Panc1 (cell line): ENCODE measurements at regions of chr20 and their contacts with region 1.

Region 1: DNA sequence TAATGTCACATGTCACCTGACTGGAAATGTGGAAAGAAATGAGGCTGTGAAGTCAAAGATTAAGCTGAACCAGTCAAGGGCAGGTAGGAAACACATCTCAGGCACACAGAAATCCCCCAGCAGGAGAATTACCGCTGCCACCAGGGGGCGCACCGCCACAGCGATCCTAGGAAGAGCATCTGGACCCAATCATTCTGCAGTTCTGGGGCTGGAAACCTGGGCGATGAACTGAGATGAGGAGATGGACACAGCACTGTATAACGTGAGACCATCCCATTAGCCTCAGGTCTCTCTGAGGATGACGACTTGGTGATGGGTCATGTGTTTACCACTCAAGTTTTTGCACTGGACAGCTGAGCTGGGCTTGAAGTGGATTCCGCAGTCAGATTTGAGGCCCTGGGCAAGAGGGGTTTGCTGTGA is 6.5 kb upstream of the SLC24A3 start:
- DNase-seq: peak; percentile 38
- ATAC-seq: peak; percentile 84
- H3K4me3 ChIP-seq: no peak overlapping the region
- H3K27ac ChIP-seq: no peak overlapping the region
- H3K4me1 ChIP-seq: no peaks in the 10 kb centered on the region
- H3K27me3 ChIP-seq: peaks cover 27% of the 10 kb centered on the region
- CTCF ChIP-seq: peak; percentile 95

Region 2: DNA sequence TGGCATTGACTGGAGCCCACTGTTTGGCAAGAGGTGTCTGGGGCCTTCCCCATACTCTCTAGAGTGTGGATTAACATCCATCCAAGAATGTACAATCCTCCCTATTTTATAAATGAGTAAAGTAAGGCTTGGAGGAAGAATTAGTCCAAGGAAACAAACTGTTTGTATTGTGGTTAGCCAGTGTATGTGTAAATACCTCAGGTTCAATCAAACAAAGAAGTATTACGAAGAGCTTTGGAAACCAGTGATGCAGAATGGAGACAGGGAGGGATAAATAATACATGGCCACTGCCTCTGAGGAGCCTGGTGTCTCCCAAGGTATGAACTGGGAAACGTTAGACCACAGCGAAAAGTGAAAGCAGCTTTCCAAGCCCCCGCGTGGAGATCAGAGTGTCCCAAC is 325.5 kb after region 1 on chr20:
- CTCF ChIA-PET with region 1: no interaction called
- POLR2A ChIA-PET with region 1: no interaction called
- in situ Hi-C with region 1: no loop called
- intact Hi-C with region 1: no loop called
- DNase-seq: no peak
- ATAC-seq: no peak
- H3K4me3 ChIP-seq: no peak overlapping the region
- H3K27ac ChIP-seq: no peak overlapping the region
- H3K4me1 ChIP-seq: no peaks in the 10 kb centered on the region
- H3K27me3 ChIP-seq: peaks cover 3% of the 10 kb centered on the region; the same call in 1 of the 2 replicates
- CTCF ChIP-seq: no peak

Region 3: GRCh38 chr20:19583532-19584175 is 377.7 kb after region 1 on chr20:
- CTCF ChIA-PET with region 1: interaction called, 3 read pairs
- POLR2A ChIA-PET with region 1: no interaction called
- in situ Hi-C with region 1: no loop called
- intact Hi-C with region 1: loop called (anchors 5 kb)
- DNase-seq: peak; percentile 8
- ATAC-seq: peak; percentile 84
- H3K4me3 ChIP-seq: no peak overlapping the region
- H3K27ac ChIP-seq: no peak overlapping the region
- H3K4me1 ChIP-seq: no peaks in the 10 kb centered on the region
- H3K27me3 ChIP-seq: peaks cover 16% of the 10 kb centered on the region
- CTCF ChIP-seq: peak; percentile 80